Esophagus muscularis mucosa (tissue), 4 donors: ENCODE measurements at regions of chr10 and their contacts with region 1.

Region 1: GRCh38 chr10:97463363-97464132 is 17.6 kb downstream of the ZDHHC16 start:
- DNase-seq: no peak
- H3K4me3 ChIP-seq: no peak overlapping the region
- H3K27ac ChIP-seq: peak overlapping the region; percentile 21 to 45 (median 36)
- H3K4me1 ChIP-seq: peaks cover 0 to 7% (median 6%) of the 10 kb centered on the region in 4 donors
- H3K27me3 ChIP-seq: no peaks in the 10 kb centered on the region
- CTCF ChIP-seq: peak; percentile 73 to 86 (median 84)
- EP300 ChIP-seq: no peak
- POLR2A ChIP-seq: no peak

Region 2: GRCh38 chr10:97498076-97498840 is 34.7 kb after region 1 on chr10 and contains the start of gene MMS19:
- intact Hi-C with region 1: loop called (anchors 5 kb)
- DNase-seq: peak; percentile 100
- H3K4me3 ChIP-seq: peak within 1 kb of the TSS; percentile 86 to 97 (median 90)
- H3K27ac ChIP-seq: peak within 1 kb of the TSS; percentile 91 to 96 (median 94)
- H3K4me1 ChIP-seq: peaks cover 52 to 62% (median 60%) of the 10 kb centered on the region in 4 donors
- H3K27me3 ChIP-seq: no peaks in the 10 kb centered on the region
- CTCF ChIP-seq: no peak
- EP300 ChIP-seq: no peak
- POLR2A ChIP-seq: peak; percentile 74
- total RNA-seq, gene MMS19: 46.9 to 51.4 (median 48.6) TPM

Region 3: DNA sequence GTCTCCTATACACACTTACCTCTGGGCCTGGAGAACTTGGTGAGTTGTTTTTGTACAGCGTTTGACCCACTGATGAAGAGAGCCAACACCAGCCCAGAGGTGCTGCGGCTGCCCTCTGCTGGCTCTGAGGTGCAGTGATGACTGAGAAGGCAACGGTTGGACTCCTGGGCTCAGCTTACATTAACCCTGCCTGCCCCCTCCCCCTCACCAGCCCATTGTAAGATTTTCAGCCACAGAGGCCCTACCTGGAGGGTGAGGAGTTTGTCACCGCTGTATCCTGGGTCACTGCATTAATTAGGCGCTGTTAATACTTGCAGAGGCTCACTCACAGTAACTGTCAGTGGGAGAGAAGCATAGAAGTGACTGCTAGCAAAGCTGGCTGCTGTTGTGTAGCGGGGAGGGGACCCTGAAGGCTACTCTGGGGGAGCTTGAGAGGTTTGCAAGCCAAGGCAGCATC is 90.1 kb after region 1 on chr10:
- intact Hi-C with region 1: loop called (anchors 1 kb)
- DNase-seq: no peak
- H3K4me3 ChIP-seq: no peak overlapping the region
- H3K27ac ChIP-seq: peak overlapping the region in 1 of 4 donors; percentile 3
- H3K4me1 ChIP-seq: peaks cover 24 to 31% (median 28%) of the 10 kb centered on the region in 4 donors
- H3K27me3 ChIP-seq: no peaks in the 10 kb centered on the region
- CTCF ChIP-seq: peak; percentile 76 to 90 (median 87)
- EP300 ChIP-seq: no peak
- POLR2A ChIP-seq: no peak

Region 4: DNA sequence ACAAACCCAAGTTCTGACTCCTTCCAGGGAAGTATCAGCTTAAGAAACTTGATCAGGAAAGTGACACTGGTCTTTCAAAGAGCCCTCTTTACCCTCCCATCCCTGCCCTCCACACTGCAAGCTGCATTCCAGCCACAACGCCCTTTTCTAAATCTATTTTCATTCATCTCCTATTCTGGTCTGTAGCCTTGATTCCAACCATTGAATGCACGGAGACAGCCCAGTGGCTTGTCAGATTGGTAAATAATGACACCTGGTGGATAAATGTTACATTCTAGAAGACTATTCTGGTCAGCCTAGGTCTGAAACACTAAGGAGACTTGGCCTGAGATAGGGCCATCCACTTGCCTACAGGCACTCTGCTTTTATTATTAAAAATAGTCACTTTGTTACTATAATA is 148.8 kb after region 1 on chr10:
- intact Hi-C with region 1: loop called (anchors 5 kb)
- DNase-seq: no peak
- H3K4me3 ChIP-seq: no peak overlapping the region
- H3K27ac ChIP-seq: no peak overlapping the region
- H3K4me1 ChIP-seq: peaks cover 4 to 22% (median 15%) of the 10 kb centered on the region in 4 donors
- H3K27me3 ChIP-seq: no peaks in the 10 kb centered on the region
- CTCF ChIP-seq: peak; percentile 49 to 81 (median 63)
- EP300 ChIP-seq: no peak
- POLR2A ChIP-seq: no peak